ENCODE measurements at regions of chr14 and their contacts with region 1.

Region 1: GRCh38 chr14:24734878-24735500 is 101.0 kb upstream of the GZMB start:
- DNase-seq: no peak

Region 2: DNA sequence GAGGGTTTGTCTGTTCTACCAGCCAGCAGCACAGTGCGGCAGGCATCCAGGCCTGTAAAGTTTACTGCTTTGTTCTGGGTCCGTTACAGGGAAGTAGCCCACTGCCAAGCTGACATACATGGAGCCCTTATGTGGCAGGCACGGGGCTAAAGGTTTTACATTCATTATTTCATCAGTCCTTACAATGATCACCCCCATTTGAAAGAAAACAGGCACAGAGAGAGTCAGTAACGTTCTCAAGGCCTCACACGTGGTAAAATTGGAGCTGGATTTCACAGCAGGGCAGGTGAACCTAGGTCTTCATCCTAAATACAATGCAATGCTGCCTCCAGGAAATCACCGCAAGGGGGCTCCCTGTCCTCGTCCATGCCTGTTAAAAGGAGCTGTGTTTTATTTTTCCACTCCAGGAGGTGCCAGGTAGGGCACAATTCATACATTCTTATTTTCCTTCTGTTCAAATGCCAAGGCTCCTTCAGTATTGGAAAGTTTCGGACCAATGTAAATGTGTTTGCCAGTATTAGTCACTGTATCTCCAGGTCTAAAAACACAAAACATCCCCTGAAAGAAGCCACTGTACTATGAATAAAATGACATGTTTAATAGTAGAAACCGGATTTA is 71.2 kb after region 1 on chr14:
- intact Hi-C with region 1: loop called (anchors 5 kb)
- DNase-seq: no peak

Region 3: DNA sequence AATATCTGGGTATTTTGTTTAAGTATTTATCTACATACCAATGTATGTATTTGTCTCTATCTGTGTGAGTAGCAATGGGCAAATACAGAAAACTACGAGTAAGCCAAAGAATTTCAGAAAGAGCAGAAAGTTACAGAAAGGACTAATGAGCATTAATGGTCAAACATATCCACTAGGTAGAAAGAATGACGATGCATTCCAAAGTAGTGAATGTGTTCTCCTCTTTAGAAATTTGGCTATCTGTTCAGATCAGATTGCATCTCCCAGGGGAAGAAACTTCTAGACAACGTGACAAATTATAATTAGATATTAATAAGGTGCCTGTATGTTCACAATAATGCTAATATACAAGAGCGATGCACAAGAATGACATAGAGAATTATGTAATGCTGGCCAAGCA is 93.5 kb after region 1 on chr14:
- intact Hi-C with region 1: no loop called
- DNase-seq: no peak

Region 4: GRCh38 chr14:25121337-25122122 is 386.5 kb after region 1 on chr14:
- intact Hi-C with region 1: no loop called
- DNase-seq: no peak

Region 5: DNA sequence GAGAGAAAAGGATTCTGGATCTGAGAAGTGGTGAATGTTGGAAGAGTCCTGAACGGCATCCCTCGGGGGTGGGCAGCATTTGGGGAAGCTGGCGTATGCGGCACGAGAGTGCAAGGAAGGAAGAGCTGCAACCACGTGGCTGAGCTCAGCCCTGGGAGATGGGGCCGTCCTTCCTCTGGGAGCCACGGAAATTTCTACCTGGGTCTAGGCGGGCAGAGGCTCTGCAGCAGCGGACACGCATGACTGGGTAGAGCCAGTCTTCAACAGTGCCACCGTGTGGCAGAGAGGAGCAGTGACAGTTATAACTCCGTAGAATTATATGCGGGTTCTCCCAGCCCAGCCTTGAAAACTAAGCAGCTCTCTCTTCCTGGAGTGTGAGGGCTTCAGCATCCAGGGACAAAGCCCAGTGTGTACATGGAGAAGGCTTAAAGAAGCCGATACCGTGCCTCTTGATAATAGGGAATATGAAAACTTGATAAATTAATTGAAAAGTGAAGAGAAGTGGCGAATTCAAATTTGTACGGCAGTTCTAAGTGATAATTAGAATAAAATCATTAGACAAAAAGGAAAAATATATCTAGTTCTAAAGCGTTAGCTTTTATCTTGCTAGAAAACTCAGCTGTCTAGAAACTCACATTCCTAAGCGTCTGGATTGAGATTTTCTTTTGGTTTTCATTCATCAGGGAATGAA is 397.9 kb after region 1 on chr14:
- intact Hi-C with region 1: loop called (anchors 5 kb)
- DNase-seq: peak; percentile 80

Region 6: GRCh38 chr14:25150934-25151790 is 416.2 kb after region 1 on chr14:
- intact Hi-C with region 1: loop called (anchors 5 kb)
- DNase-seq: no peak

Measured in cardiac septum (tissue), 1 donor.